ENCODE measurements at regions of chr4 and their contacts with region 1.

Region 1: DNA sequence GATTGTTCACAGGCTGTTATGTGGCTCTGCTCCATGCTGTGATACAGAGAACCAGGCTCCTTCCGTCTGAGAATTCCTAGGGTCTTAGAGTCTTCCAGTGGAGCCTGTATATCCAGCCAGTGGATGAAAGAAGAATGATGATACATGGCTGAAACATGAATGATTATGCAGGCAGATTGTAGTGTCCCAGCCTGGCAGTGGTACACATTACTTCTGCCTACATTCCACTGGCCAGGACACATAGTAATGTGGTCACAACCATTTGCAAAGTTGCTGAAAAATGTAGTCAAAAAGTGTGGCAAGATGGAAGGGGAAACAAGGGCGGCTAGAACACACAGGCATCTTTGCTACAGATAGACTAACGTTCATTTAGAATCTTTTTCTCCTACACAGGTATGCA is 4.5 kb upstream of the GBA3 start:
- DNase-seq: no peak
- ATAC-seq: no peak

Region 2: GRCh38 chr4:21790438-21791029 is 897.7 kb before region 1 on chr4:
- intact Hi-C with region 1: loop called in 1 of 2 experiments (anchors 5 kb)
- DNase-seq: no peak
- ATAC-seq: peak; percentile 34

Region 3: GRCh38 chr4:22410645-22411247 is 277.5 kb before region 1 on chr4:
- intact Hi-C with region 1: loop called in 1 of 2 experiments (anchors 2 kb)
- DNase-seq: no peak
- ATAC-seq: no peak

Region 4: GRCh38 chr4:22941688-22942375 is 253.6 kb after region 1 on chr4:
- intact Hi-C with region 1: no loop called
- DNase-seq: peak in 1 of 2 donors; percentile 6
- ATAC-seq: peak; percentile 75

Measured in left colon (tissue), 2 donors.